A673 (cell line): ENCODE measurements at regions of chr19 and their contacts with region 1.

Region 1: DNA sequence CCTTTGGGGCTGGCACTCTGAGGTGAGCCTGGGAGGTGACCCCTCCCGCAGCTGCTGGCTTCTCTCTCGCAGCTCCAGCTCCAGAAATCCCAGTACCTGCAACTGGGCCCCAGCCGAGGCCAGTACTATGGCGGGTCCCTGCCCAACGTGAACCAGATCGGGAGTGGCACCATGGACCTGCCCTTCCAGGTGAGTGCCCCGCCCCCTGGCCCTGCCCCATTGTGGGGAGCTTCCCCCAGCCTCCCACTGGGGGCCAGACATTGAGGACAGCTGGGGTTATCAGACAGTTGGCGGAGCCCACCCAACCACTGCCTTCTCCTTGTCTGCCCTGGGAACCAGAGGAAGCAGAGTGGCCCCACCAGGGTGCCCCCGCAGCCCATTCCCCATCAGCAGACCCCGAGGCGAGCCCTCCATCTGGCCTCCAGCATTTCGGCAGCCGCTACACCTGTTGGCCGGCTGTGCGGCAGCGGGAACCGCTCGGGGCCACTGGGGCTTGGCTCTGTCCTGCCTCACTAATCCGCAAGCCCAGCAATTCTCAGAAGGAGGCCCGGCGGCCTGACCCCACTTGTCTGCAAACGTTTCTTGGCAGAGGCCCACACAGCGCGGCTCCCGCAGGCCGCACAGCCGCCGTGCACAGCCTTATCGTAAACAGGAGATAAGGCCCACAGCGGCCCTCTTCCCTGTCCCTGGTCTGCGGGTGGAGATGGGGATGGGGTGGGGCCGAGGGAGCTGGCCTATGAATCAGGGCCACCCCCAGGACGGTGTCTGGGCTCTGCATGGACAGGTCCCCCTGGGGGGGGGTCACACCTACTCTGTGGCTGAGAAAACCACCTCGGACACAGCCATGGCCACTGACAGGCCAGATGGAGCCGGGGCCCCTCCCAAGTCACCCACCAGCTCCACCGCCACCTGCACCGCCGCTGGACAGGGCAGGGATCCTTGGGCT is 48.0 kb downstream of the COMP start:
- DNase-seq: no peak
- H3K4me3 ChIP-seq: no peak overlapping the region
- H3K27ac ChIP-seq: no peak overlapping the region
- H3K4me1 ChIP-seq: no peaks in the 10 kb centered on the region
- H3K27me3 ChIP-seq: no peaks in the 10 kb centered on the region
- CTCF ChIP-seq: no peak

Region 2: GRCh38 chr19:18789883-18790565 is 46.9 kb after region 1 on chr19:
- CTCF ChIA-PET with region 1: no interaction called
- POLR2A ChIA-PET with region 1: interaction called, 11 read pairs
- intact Hi-C with region 1: no loop called
- DNase-seq: peak; percentile 72
- H3K4me3 ChIP-seq: peak overlapping the region; percentile 29
- H3K27ac ChIP-seq: no peak overlapping the region
- H3K4me1 ChIP-seq: peaks cover 14% of the 10 kb centered on the region
- H3K27me3 ChIP-seq: peaks cover 50% of the 10 kb centered on the region
- CTCF ChIP-seq: no peak